Dorsolateral prefrontal cortex (tissue), 120 donors: ENCODE measurements at regions of chr5 and their contacts with region 1.

Region 1: GRCh38 chr5:71455427-71456361 is at the start of gene BDP1:
- DNase-seq: peak; percentile 93 to 98 (median 98)
- H3K4me3 ChIP-seq: peak within 1 kb of the TSS; percentile 52 to 98 (median 87)
- H3K27ac ChIP-seq: peak within 1 kb of the TSS in 58 of 59 donors; percentile 50 to 97 (median 87)
- H3K27me3 ChIP-seq: peaks cover 0 to 7% (median 0%) of the 10 kb centered on the region in 45 donors
- CTCF ChIP-seq: peak in 31 of 56 donors; percentile 4 to 45 (median 20)
- total RNA-seq, gene BDP1: 34.9 to 54.4 (median 43.9) TPM

Region 2: GRCh38 chr5:71586941-71587765 is 131.5 kb after region 1 on chr5 and contains the start of gene MCCC2:
- intact Hi-C with region 1: loop called (anchors 10 kb)
- DNase-seq: peak; percentile 94 to 98 (median 97)
- H3K4me3 ChIP-seq: peak within 1 kb of the TSS; percentile 67 to 100 (median 93)
- H3K27ac ChIP-seq: peak within 1 kb of the TSS in 56 of 59 donors; percentile 4 to 90 (median 80)
- H3K27me3 ChIP-seq: no peaks in the 10 kb centered on the region
- CTCF ChIP-seq: peak in 16 of 56 donors; percentile 7 to 33 (median 22)
- total RNA-seq, gene MCCC2: 15.7 to 40.4 (median 28.3) TPM

Region 3: DNA sequence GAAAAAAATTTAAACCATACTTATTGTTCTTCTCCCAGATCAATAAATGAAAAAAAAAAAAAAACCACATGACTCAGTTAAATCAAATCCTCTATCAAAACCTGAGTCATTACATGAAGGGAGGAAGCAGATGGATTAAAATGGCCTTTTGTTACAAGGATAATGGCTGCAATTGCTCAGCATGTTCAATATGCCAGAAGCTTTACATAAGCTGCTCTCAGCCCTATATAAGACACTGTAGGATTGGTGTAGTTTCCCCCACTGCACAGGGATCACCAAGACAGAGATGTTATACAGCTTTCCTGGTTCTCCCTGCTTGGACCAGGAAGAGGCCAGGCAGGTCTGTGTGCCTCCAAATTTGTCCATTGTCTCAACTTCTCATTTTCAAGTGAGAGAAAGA is 550.0 kb after region 1 on chr5:
- intact Hi-C with region 1: no loop called
- DNase-seq: no peak
- H3K4me3 ChIP-seq: no peak overlapping the region
- H3K27ac ChIP-seq: peak overlapping the region in 9 of 59 donors; percentile 5 to 33 (median 20)
- H3K27me3 ChIP-seq: no peaks in the 10 kb centered on the region
- CTCF ChIP-seq: no peak